Dorsolateral prefrontal cortex (tissue), 120 donors: ENCODE measurements at regions of chr1 and their contacts with region 1.

Region 1: GRCh38 chr1:55284852-55285251 is 69.7 kb upstream of the USP24 start:
- DNase-seq: peak in 2 of 10 donors; percentile 23 to 30
- H3K4me3 ChIP-seq: peak overlapping the region in 1 of 59 donors; percentile 7
- H3K27ac ChIP-seq: peak overlapping the region in 1 of 59 donors; percentile 53
- H3K27me3 ChIP-seq: peaks cover 0 to 10% (median 0%) of the 10 kb centered on the region in 45 donors
- CTCF ChIP-seq: peak in 54 of 56 donors; percentile 48 to 91 (median 71)

Region 2: GRCh38 chr1:55304229-55304740 is 19.4 kb after region 1 on chr1:
- intact Hi-C with region 1: no loop called
- DNase-seq: no peak
- H3K4me3 ChIP-seq: no peak overlapping the region
- H3K27ac ChIP-seq: no peak overlapping the region
- H3K27me3 ChIP-seq: peaks cover 0 to 7% (median 0%) of the 10 kb centered on the region in 45 donors
- CTCF ChIP-seq: no peak

Region 3: GRCh38 chr1:55368698-55369097 is 83.8 kb after region 1 on chr1:
- intact Hi-C with region 1: no loop called
- DNase-seq: no peak
- H3K4me3 ChIP-seq: no peak overlapping the region
- H3K27ac ChIP-seq: no peak overlapping the region
- H3K27me3 ChIP-seq: peaks cover 0 to 6% (median 0%) of the 10 kb centered on the region in 45 donors
- CTCF ChIP-seq: no peak

Region 4: DNA sequence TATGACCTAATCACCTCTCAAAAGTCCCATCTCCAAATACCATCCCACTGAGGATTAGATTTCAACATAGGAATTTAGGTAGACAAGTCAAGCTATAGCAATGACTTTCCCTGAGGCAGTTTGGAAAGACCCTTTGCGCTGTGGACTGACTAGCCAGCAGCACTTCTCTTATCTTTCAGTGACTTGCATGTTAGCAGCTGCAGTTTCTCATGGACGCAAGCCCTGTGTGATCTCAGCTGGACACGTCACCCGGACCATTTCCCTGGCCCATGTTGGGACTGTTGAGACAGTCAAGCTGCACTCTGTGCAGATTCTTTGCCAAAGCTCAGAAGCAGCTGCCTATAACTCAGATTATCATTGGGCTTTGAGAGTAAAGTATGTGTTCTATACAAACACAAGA is 338.5 kb after region 1 on chr1:
- intact Hi-C with region 1: no loop called
- DNase-seq: peak in 1 of 10 donors; percentile 27
- H3K4me3 ChIP-seq: no peak overlapping the region
- H3K27ac ChIP-seq: no peak overlapping the region
- H3K27me3 ChIP-seq: peaks cover 0 to 3% (median 0%) of the 10 kb centered on the region in 45 donors
- CTCF ChIP-seq: no peak

Region 5: GRCh38 chr1:56709269-56709880 is 1424.5 kb after region 1 on chr1:
- intact Hi-C with region 1: loop called (anchors 5 to 10 kb)
- DNase-seq: no peak
- H3K4me3 ChIP-seq: no peak overlapping the region
- H3K27ac ChIP-seq: no peak overlapping the region
- H3K27me3 ChIP-seq: no peaks in the 10 kb centered on the region
- CTCF ChIP-seq: peak; percentile 49 to 83 (median 71)